Caco-2 (cell line): ENCODE measurements at regions of chr18 and their contacts with region 1.

Region 1: DNA sequence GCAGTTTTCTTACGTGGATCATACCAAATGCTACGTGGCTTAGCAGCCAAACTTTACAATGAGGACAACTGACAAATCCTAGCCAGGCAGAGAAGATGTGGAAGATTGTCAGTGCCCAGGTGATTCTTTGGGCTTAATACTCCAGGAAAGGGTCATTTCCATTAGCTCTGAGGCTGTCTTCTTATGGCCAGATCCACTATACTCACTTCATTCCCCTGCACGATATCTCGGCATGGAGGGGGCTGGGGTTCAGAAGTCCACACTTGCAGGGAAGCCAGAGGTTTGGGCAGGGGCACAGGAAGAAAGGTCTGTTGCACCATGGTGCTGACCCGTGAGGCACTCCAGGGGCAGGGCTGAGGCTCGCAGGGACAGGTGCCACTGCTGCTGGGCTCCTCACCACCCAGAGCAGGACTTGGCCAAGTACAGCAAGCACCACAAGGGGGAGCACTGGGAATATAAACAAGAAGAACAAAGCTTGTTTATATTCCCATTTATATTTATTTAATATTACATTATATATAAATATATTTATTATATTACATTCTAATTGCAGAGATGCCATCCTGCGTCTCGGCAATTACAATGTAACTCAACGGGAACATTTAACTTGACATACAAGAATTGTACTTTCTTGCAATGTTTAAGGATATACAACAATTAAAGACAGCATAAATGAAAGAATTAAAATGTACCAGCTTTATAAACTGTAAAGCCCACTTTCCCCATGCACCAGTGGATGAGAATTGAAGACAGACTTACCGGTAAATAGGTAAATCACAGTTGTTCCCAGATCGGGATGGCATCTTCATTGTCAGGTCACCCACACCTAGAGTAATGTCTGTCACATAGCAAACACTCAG is 27.2 kb downstream of the CLUL1 start:
- DNase-seq: peak; percentile 71 to 79
- H3K4me3 ChIP-seq: no peak overlapping the region
- H3K4me3 Mint-ChIP-seq: no peak overlapping the region
- H3K27ac Mint-ChIP-seq: no peak overlapping the region
- H3K4me1 ChIP-seq: no peaks in the 10 kb centered on the region
- H3K4me1 Mint-ChIP-seq: no peaks in the 10 kb centered on the region
- H3K27me3 ChIP-seq: no peaks in the 10 kb centered on the region
- H3K27me3 Mint-ChIP-seq: peaks cover under 1% of the 10 kb centered on the region
- CTCF ChIP-seq: peak; percentile 68 to 82

Region 2: DNA sequence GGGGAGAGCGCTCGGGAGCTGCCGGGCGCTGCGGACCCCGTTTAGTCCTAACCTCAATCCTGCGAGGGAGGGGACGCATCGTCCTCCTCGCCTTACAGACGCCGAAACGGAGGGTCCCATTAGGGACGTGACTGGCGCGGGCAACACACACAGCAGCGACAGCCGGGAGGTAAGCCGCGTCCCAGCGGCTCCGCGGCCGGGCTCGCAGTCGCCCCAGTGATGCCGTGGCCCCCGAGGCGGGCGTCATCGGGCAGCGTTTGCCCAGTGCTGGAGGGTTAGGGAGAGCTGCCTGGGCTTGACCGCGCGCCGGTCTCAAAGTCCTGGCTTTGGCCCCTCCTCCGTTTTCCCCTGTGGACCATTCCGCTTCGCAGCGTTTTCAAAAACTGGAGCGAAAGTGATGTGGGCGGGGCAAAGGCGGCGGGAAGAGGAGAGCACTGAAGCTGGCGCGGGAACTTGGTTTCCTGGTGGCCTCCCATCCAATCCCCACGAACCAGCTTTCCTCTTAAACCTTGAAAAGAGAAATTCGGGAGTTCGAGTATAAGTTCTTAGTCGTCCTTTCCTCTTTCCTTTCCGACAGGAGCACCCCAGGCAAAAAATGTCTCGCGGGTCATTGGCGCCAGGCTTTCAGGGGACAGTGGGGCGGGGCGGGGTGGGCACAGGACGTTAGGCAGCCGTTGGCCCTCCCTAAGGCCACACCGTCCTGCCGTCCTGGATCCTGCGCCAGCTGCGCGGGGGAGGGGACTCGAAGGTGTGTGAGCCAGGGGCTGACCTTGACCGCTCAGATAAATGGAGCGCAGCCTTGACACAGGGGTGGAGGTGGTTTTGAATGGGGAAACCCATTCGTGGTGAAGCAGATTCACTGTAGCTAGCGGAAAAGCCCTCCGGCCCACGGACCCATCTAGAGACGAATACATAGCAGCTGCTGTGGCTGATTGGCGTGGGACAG is 34.3 kb after region 1 on chr18:
- CTCF ChIA-PET with region 1: interaction called, 3 read pairs
- POLR2A ChIA-PET with region 1: no interaction called
- intact Hi-C with region 1: loop called (anchors 2 kb)
- DNase-seq: peak; percentile 94
- H3K4me3 ChIP-seq: peak overlapping the region; percentile 82
- H3K4me3 Mint-ChIP-seq: peak overlapping the region; percentile 89
- H3K27ac Mint-ChIP-seq: peak overlapping the region; percentile 78
- H3K4me1 ChIP-seq: no peaks in the 10 kb centered on the region
- H3K4me1 Mint-ChIP-seq: no peaks in the 10 kb centered on the region
- H3K27me3 ChIP-seq: no peaks in the 10 kb centered on the region
- H3K27me3 Mint-ChIP-seq: no peaks in the 10 kb centered on the region
- CTCF ChIP-seq: no peak

Region 3: GRCh38 chr18:830315-830901 is 206.4 kb after region 1 on chr18:
- CTCF ChIA-PET with region 1: interaction called, 21 read pairs
- POLR2A ChIA-PET with region 1: no interaction called
- intact Hi-C with region 1: loop called (anchors 1 kb)
- DNase-seq: no peak
- H3K4me3 ChIP-seq: no peak overlapping the region
- H3K4me3 Mint-ChIP-seq: no peak overlapping the region
- H3K27ac Mint-ChIP-seq: no peak overlapping the region
- H3K4me1 ChIP-seq: peaks cover 10% of the 10 kb centered on the region; the same call in 1 of the 2 replicates
- H3K4me1 Mint-ChIP-seq: peaks cover 9% of the 10 kb centered on the region
- H3K27me3 ChIP-seq: no peaks in the 10 kb centered on the region
- H3K27me3 Mint-ChIP-seq: no peaks in the 10 kb centered on the region
- CTCF ChIP-seq: no peak

Region 4: DNA sequence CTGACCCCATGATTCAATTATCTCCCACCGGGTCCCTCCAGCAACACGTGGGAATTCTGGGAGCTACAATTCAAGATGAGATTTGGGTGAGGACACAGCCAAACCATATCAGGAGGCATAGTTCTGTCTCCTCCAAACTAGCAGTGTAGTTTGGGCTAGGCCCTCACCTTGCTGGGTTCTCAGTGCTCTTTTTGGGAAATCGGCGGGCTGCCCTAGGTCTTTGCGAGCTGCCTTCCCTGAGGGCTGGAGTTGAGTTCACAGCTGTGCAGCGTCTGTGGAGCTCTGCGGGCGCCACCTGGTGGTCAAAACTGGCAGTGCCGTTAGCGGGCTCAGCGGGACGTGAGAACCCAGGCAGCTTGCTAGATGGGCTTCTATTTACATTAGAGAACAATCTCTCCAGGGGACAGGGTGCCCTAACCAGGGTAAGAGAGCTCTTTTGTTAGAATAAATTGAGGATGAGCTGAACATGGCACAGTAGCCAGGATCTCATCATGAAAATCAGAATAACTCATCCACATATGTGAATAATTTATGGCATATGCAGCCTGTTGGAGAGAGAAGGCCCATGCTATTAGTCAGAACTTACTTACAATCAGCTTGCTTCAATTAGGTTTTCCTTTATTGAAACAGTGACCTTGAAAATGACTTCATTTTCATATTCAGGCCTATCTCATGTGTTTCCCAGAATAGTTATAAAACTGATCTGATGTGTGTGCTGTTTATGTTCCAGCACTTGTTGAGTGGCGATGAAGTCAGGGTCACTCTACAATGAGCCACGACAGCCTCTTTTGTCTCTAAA is 215.4 kb after region 1 on chr18:
- CTCF ChIA-PET with region 1: interaction called, 16 read pairs
- POLR2A ChIA-PET with region 1: no interaction called
- intact Hi-C with region 1: loop called (anchors 2 kb)
- DNase-seq: peak; percentile 78 to 86
- H3K4me3 ChIP-seq: no peak overlapping the region
- H3K4me3 Mint-ChIP-seq: no peak overlapping the region
- H3K27ac Mint-ChIP-seq: no peak overlapping the region
- H3K4me1 ChIP-seq: no peaks in the 10 kb centered on the region; the same call in 1 of the 2 replicates
- H3K4me1 Mint-ChIP-seq: peaks cover 13% of the 10 kb centered on the region
- H3K27me3 ChIP-seq: no peaks in the 10 kb centered on the region
- H3K27me3 Mint-ChIP-seq: no peaks in the 10 kb centered on the region
- CTCF ChIP-seq: peak; percentile 84 to 92